SK-N-SH (cell line): ENCODE measurements at regions of chr18 and their contacts with region 1.

Region 1: GRCh38 chr18:5057386-5058348 is 139.4 kb downstream of the AKAIN1 start:
- DNase-seq: peak; percentile 51
- H3K4me3 ChIP-seq: no peak overlapping the region; a peak in 1 of 4 replicates
- H3K27ac ChIP-seq: no peak overlapping the region
- H3K4me1 ChIP-seq: no peaks in the 10 kb centered on the region
- H3K27me3 ChIP-seq: no peaks in the 10 kb centered on the region
- CTCF ChIP-seq: peak; percentile 78
- EP300 ChIP-seq: no peak
- RAD21 ChIP-seq: peak; percentile 81

Region 2: GRCh38 chr18:5073026-5073944 is 15.6 kb after region 1 on chr18:
- CTCF ChIA-PET with region 1: interaction called, 12 read pairs
- POLR2A ChIA-PET with region 1: no interaction called
- DNase-seq: peak; percentile 45
- H3K4me3 ChIP-seq: peak overlapping the region in 1 of 2 experiments; percentile 43; a peak in 1 of 4 replicates
- H3K27ac ChIP-seq: no peak overlapping the region
- H3K4me1 ChIP-seq: no peaks in the 10 kb centered on the region
- H3K27me3 ChIP-seq: no peaks in the 10 kb centered on the region
- CTCF ChIP-seq: peak; percentile 51
- EP300 ChIP-seq: no peak
- RAD21 ChIP-seq: peak; percentile 83

Region 3: GRCh38 chr18:5097116-5097703 is 39.5 kb after region 1 on chr18:
- CTCF ChIA-PET with region 1: no interaction called
- POLR2A ChIA-PET with region 1: no interaction called
- DNase-seq: no peak
- H3K4me3 ChIP-seq: no peak overlapping the region
- H3K27ac ChIP-seq: no peak overlapping the region
- H3K4me1 ChIP-seq: no peaks in the 10 kb centered on the region
- H3K27me3 ChIP-seq: no peaks in the 10 kb centered on the region
- CTCF ChIP-seq: no peak
- EP300 ChIP-seq: no peak
- RAD21 ChIP-seq: no peak